Transverse colon (tissue), 4 donors: ENCODE measurements at regions of chr17 and their contacts with region 1.

Region 1: GRCh38 chr17:49003623-49004511 is 6.7 kb downstream of the IGF2BP1 start:
- DNase-seq: no peak
- H3K4me3 ChIP-seq: no peak overlapping the region
- H3K27ac ChIP-seq: no peak overlapping the region
- H3K4me1 ChIP-seq: peaks cover 0 to 5% (median 0%) of the 10 kb centered on the region in 4 donors
- H3K27me3 ChIP-seq: peaks cover 99% of the 10 kb centered on the region
- CTCF ChIP-seq: no peak
- EP300 ChIP-seq: no peak
- POLR2A ChIP-seq: no peak

Region 2: DNA sequence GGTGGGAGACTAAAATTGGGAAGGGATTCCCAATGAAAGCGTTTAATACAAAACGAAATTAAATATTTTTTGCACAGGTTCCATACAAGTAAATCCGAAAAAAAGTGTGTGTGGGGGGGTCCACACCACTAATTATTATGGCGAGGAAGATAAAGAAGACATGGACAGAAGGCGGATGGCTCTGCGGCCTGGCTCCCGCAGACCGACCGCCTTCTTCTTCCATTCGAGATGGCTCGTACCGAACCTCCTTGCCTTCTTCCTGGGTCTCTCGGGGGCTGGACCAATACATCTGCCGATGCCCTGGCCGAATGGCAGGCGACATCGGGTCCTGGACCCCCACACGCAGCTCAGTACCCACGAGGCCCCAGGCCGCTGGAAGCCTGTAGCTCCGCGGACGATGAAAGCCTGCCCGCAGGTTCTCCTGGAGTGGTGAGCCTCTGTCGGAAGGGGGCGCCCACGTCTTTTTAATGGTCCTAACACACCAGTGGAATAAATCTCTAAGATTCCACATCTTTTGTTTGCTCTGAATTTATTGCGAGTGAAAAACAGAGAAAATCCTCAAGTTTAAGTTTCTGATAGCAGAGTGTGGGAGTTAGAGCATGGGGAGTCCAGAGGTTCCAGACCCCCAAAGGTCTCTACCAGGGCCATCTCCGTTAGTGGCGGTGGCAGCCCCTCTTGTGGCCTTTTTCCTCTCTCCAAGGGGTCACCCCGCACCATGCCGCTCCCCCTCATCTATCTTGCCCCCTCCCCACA is 279.4 kb before region 1 on chr17:
- in situ Hi-C with region 1: no loop called
- intact Hi-C with region 1: loop called (anchors 10 kb)
- DNase-seq: peak; percentile 92
- H3K4me3 ChIP-seq: peak overlapping the region in 1 of 4 donors; percentile 45
- H3K27ac ChIP-seq: peak overlapping the region in 1 of 4 donors; percentile 61
- H3K4me1 ChIP-seq: peaks cover 12 to 50% (median 42%) of the 10 kb centered on the region in 4 donors
- H3K27me3 ChIP-seq: peaks cover 100% of the 10 kb centered on the region
- CTCF ChIP-seq: peak; percentile 74 to 84 (median 77)
- EP300 ChIP-seq: no peak
- POLR2A ChIP-seq: no peak

Region 3: DNA sequence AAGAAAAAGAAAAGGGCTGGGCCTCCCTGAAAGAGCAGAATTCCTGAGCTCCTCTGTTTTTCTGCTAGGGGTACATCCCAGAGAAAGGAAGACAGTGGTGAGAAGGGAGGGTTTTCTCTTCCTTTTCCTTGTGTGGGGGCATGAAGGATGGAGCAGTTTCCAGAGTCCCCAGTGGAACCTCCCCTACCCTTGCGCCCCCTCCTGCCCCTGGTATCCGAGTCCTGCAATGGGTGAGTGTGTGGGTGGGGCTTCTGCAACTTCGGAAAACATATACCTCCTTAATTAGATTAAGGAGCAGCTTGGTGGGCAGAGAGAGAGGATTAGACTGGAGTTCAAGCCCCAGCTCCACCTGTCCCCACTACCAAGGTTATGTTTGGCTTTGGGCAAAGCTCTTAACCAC is 30.1 kb before region 1 on chr17:
- in situ Hi-C with region 1: no loop called
- intact Hi-C with region 1: no loop called
- DNase-seq: no peak
- H3K4me3 ChIP-seq: no peak overlapping the region
- H3K27ac ChIP-seq: no peak overlapping the region
- H3K4me1 ChIP-seq: peaks cover 0 to 4% (median 0%) of the 10 kb centered on the region in 4 donors
- H3K27me3 ChIP-seq: peaks cover 59% of the 10 kb centered on the region
- CTCF ChIP-seq: no peak
- EP300 ChIP-seq: no peak
- POLR2A ChIP-seq: no peak

Region 4: DNA sequence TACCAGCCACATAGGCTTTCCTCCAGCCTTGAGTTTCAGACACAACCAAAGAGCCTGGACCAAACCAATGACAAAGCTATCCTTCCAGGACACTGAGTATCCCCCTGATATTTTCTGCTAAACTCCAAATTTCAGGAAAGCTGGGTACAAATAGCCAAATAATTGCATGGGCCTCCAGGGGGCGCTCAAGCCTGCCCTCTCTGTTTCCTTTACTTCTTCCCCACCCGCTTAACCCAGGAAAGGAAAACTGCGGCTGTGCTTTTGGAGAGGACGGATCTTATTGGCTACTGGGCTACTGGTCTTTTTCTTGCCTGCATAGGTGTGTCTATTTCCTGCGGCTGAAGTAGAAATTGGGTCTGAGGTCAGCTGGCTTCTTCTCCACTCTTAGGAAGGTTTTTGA is 176.4 kb after region 1 on chr17:
- in situ Hi-C with region 1: no loop called
- intact Hi-C with region 1: no loop called
- DNase-seq: peak; percentile 74
- H3K4me3 ChIP-seq: no peak overlapping the region
- H3K27ac ChIP-seq: no peak overlapping the region
- H3K4me1 ChIP-seq: no peaks in the 10 kb centered on the region
- H3K27me3 ChIP-seq: no peaks in the 10 kb centered on the region
- CTCF ChIP-seq: peak; percentile 67 to 84 (median 73)
- EP300 ChIP-seq: no peak
- POLR2A ChIP-seq: no peak